ENCODE measurements at regions of chr6 and their contacts with region 1.

Region 1: GRCh38 chr6:31060145-31060544 is 49.9 kb downstream of the MUC22 start:
- DNase-seq: no peak
- H3K4me3 ChIP-seq: no peak overlapping the region
- H3K27ac ChIP-seq: no peak overlapping the region
- H3K4me1 ChIP-seq: no peaks in the 10 kb centered on the region
- H3K27me3 ChIP-seq: peaks cover 0 to 4% (median 0%) of the 10 kb centered on the region in 7 donors
- CTCF ChIP-seq: no peak
- POLR2A ChIP-seq: no peak

Region 2: DNA sequence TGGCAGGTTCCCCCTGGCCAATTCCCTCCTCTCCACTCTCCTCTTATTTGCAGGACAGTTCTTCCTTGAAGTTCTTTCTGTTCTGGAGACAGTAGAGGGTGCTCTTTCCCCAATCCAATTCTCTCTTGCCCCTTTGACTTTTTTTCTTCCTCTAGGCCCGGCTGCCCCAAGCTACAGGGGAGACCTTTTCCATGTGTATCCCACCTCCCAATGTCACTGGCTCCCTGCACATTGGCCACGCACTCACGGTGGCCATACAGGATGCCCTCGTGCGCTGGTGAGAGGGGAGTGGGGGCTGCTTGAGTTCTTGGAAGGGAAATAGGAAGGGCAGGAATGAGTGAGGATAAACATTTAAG is 144.6 kb before region 1 on chr6:
- intact Hi-C with region 1: loop called (anchors 5 kb)
- DNase-seq: no peak
- H3K4me3 ChIP-seq: no peak overlapping the region
- H3K27ac ChIP-seq: peak overlapping the region in 4 of 8 donors; percentile 85 to 91 (median 90)
- H3K4me1 ChIP-seq: peaks cover 18 to 43% (median 27%) of the 10 kb centered on the region in 6 donors
- H3K27me3 ChIP-seq: no peaks in the 10 kb centered on the region
- CTCF ChIP-seq: peak in 10 of 11 experiments; percentile 16 to 64 (median 47)
- POLR2A ChIP-seq: no peak

Region 3: DNA sequence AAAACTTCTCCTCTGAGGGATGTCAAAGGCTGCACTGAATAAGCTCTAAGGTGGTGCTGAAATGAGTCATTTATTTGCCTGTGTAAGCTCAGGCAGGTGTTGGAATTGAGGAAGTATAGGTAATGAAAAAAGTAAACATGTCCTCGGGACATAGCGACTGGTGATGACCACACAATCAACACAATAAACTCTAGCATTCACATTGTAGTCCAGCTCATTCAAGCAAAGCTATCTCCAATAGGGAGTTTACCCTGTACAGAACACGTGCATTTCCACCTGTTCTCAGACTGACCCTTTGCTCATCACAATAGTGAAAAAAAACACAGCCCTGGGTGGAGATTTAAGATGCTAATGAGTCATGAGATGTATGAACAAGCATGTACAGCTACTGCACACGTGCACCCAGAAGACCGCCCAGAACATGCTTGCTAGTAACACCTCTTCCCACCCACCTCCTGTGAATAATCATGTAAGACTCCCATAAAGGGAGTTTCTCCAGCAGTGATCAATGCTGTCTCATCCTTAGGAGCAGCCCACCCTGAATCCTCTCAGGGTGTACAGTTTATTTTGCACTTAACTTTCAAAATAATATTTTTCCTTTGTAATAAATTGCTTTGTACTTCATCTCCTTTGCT is 143.3 kb after region 1 on chr6:
- intact Hi-C with region 1: no loop called
- DNase-seq: no peak
- H3K4me3 ChIP-seq: peak overlapping the region; percentile 12 to 70 (median 42)
- H3K27ac ChIP-seq: peak overlapping the region; percentile 86 to 100 (median 94)
- H3K4me1 ChIP-seq: peaks cover 21 to 81% (median 47%) of the 10 kb centered on the region in 6 donors
- H3K27me3 ChIP-seq: no peaks in the 10 kb centered on the region
- CTCF ChIP-seq: no peak
- POLR2A ChIP-seq: no peak

Region 4: GRCh38 chr6:31265926-31266325 is 205.8 kb after region 1 on chr6:
- intact Hi-C with region 1: no loop called
- DNase-seq: no peak
- H3K4me3 ChIP-seq: no peak overlapping the region
- H3K27ac ChIP-seq: no peak overlapping the region
- H3K4me1 ChIP-seq: peaks cover 9 to 37% (median 25%) of the 10 kb centered on the region in 6 donors
- H3K27me3 ChIP-seq: no peaks in the 10 kb centered on the region
- CTCF ChIP-seq: no peak
- POLR2A ChIP-seq: no peak